Activated B cell treated with CpG ODN at 0.5 μM for 24 hours (primary cell): ENCODE measurements at regions of chr1 and their contacts with region 1.

Region 1: GRCh38 chr1:150515328-150516048 is at the start of gene FALEC:
- DNase-seq: peak; percentile 93
- ATAC-seq: peak; percentile 98
- H3K4me3 Mint-ChIP-seq: peak within 1 kb of the TSS; percentile 95
- H3K27ac Mint-ChIP-seq: peak within 1 kb of the TSS; percentile 83
- H3K4me1 Mint-ChIP-seq: peaks cover 27% of the 10 kb centered on the region
- H3K27me3 Mint-ChIP-seq: no peaks in the 10 kb centered on the region
- CTCF ChIP-seq: no peak
- total RNA-seq, gene FALEC: 1.1 TPM in 1 of 2 replicates, not detected in the other

Region 2: GRCh38 chr1:150259758-150260669 is 255.5 kb before region 1 on chr1:
- CTCF ChIA-PET with region 1: interaction called, 4 read pairs
- POLR2A ChIA-PET with region 1: no interaction called
- intact Hi-C with region 1: loop called (anchors 5 kb)
- DNase-seq: no peak
- ATAC-seq: no peak
- H3K4me3 Mint-ChIP-seq: no peak overlapping the region
- H3K27ac Mint-ChIP-seq: no peak overlapping the region
- H3K4me1 Mint-ChIP-seq: peaks cover 17% of the 10 kb centered on the region
- H3K27me3 Mint-ChIP-seq: peaks cover 33% of the 10 kb centered on the region
- CTCF ChIP-seq: no peak

Region 3: GRCh38 chr1:150410582-150411101 is 104.8 kb before region 1 on chr1:
- CTCF ChIA-PET with region 1: no interaction called
- POLR2A ChIA-PET with region 1: interaction called, 13 read pairs
- intact Hi-C with region 1: no loop called
- DNase-seq: no peak
- ATAC-seq: no peak
- H3K4me3 Mint-ChIP-seq: no peak overlapping the region
- H3K27ac Mint-ChIP-seq: no peak overlapping the region
- H3K4me1 Mint-ChIP-seq: peaks cover 37% of the 10 kb centered on the region
- H3K27me3 Mint-ChIP-seq: no peaks in the 10 kb centered on the region
- CTCF ChIP-seq: no peak

Region 4: GRCh38 chr1:150486964-150487762 is 28.3 kb before region 1 on chr1 and contains the start of gene TARS2:
- CTCF ChIA-PET with region 1: interaction called, 4 read pairs
- POLR2A ChIA-PET with region 1: interaction called, 41 read pairs
- intact Hi-C with region 1: loop called (anchors 1 kb)
- DNase-seq: peak; percentile 78
- ATAC-seq: peak; percentile 100
- H3K4me3 Mint-ChIP-seq: peak within 1 kb of the TSS; percentile 96
- H3K27ac Mint-ChIP-seq: peak within 1 kb of the TSS; percentile 98
- H3K4me1 Mint-ChIP-seq: peaks cover 18% of the 10 kb centered on the region
- H3K27me3 Mint-ChIP-seq: no peaks in the 10 kb centered on the region
- CTCF ChIP-seq: no peak
- total RNA-seq, gene TARS2: 42.6 and 50.7 TPM in 2 replicates

Region 5: GRCh38 chr1:150532868-150533302 is 17.4 kb after region 1 on chr1:
- CTCF ChIA-PET with region 1: interaction called, 4 read pairs
- POLR2A ChIA-PET with region 1: no interaction called
- intact Hi-C with region 1: loop called (anchors 1 kb)
- DNase-seq: no peak
- ATAC-seq: no peak
- H3K4me3 Mint-ChIP-seq: no peak overlapping the region
- H3K27ac Mint-ChIP-seq: no peak overlapping the region
- H3K4me1 Mint-ChIP-seq: no peaks in the 10 kb centered on the region
- H3K27me3 Mint-ChIP-seq: no peaks in the 10 kb centered on the region
- CTCF ChIP-seq: no peak

Region 6: GRCh38 chr1:150621497-150622302 is 106.2 kb after region 1 on chr1:
- CTCF ChIA-PET with region 1: no interaction called
- POLR2A ChIA-PET with region 1: interaction called, 10 read pairs
- intact Hi-C with region 1: no loop called
- DNase-seq: no peak
- ATAC-seq: peak; percentile 82
- H3K4me3 Mint-ChIP-seq: peak overlapping the region; percentile 28
- H3K27ac Mint-ChIP-seq: peak overlapping the region; percentile 82
- H3K4me1 Mint-ChIP-seq: peaks cover 36% of the 10 kb centered on the region
- H3K27me3 Mint-ChIP-seq: no peaks in the 10 kb centered on the region
- CTCF ChIP-seq: no peak